SK-N-SH (cell line): ENCODE measurements at regions of chr1 and their contacts with region 1.

Region 1: GRCh38 chr1:30718636-30719405 is 4.6 kb downstream of the MATN1 start:
- DNase-seq: peak; percentile 93
- H3K4me3 ChIP-seq: peak overlapping the region; percentile 62 to 65
- H3K27ac ChIP-seq: peak overlapping the region; percentile 89 to 95
- H3K4me1 ChIP-seq: peaks cover 3 to 14% of the 10 kb centered on the region in 2 experiments; a peak in 2 of 4 replicates
- H3K27me3 ChIP-seq: no peaks in the 10 kb centered on the region
- CTCF ChIP-seq: peak; percentile 95
- EP300 ChIP-seq: no peak
- RAD21 ChIP-seq: no peak

Region 2: DNA sequence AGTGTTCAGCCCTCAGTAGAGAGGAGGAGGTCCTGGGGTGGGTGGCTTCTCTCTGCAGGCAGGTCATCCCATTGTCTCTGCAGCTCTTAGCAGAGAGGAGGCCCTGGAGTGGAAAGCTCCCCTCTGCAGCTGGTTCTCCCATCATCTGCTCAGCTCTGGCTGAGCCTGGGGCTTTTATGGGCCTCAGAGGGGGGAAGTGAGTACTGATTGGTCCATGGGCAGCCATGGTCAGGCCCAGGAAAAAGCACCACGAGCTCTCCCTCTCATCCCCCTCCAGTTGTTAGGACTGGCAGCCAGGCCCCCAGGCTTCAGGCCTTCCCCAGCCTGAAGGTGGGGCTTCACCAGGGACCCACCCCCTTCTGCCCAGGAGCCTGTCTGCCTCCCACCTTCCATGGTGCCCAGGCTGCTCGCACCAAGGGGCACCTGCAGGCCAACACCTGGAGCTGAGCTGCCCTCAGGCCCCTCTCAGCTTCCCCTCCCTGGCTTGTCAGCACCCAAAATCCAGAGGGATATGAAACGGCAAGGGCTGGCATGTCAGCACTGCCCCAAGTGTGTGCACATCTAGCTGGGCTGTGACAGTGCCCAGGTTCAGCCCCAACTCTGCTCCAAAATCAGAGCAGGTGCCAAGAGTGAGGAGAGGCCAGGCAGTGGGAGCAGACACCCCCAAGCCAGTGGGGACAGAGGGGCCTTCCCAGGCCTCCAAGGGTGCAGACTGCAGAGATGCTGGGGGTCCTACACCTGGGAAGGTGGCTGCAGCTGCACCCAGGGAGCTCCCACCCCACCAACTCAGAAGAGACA is 444.4 kb before region 1 on chr1:
- CTCF ChIA-PET with region 1: no interaction called
- POLR2A ChIA-PET with region 1: no interaction called
- DNase-seq: no peak
- H3K4me3 ChIP-seq: no peak overlapping the region
- H3K27ac ChIP-seq: no peak overlapping the region
- H3K4me1 ChIP-seq: no peaks in the 10 kb centered on the region
- H3K27me3 ChIP-seq: no peaks in the 10 kb centered on the region
- CTCF ChIP-seq: no peak
- EP300 ChIP-seq: no peak
- RAD21 ChIP-seq: no peak

Region 3: DNA sequence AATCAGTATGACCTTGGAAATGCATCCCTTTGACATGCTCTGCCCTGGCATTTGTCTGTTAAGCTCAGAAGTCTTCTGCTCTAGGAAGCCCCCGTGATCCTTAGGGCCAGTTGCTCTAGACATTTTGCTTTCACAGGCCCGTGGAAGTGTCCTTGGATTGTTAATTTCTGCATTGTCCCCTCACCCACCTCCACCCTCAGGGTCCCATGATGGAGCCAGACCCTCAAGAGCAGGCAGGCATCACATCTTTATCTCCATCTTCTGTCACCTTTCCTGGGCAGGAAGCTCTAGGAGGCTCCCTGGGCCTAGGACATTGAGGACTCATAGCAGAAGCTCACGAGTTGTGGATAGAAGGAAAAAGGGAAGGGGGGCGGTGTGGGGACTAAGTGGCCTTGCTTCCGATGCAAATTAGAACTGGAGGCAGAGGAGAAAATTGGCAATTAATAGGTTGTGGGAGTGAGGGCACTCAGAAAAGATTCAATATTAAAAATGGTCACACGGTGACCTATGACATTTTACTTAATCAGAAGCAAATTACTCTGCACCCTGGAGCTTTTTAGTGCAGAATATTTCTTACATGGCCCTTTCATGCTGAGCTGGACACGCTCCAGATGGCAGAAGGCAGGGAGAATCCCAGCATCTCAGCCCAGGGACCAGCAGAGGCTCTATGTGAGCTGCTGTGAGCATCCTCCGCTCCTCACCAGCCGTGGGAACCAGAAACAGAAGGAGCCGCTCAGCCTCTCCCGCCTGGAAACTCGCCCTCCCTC is 180.4 kb before region 1 on chr1:
- CTCF ChIA-PET with region 1: no interaction called
- POLR2A ChIA-PET with region 1: no interaction called
- DNase-seq: no peak
- H3K4me3 ChIP-seq: no peak overlapping the region
- H3K27ac ChIP-seq: no peak overlapping the region
- H3K4me1 ChIP-seq: no peaks in the 10 kb centered on the region; a peak in 1 of 4 replicates
- H3K27me3 ChIP-seq: no peaks in the 10 kb centered on the region
- CTCF ChIP-seq: no peak
- EP300 ChIP-seq: no peak
- RAD21 ChIP-seq: no peak

Region 4: GRCh38 chr1:30707412-30708360 is 11.1 kb before region 1 on chr1:
- CTCF ChIA-PET with region 1: interaction called, 19 read pairs
- POLR2A ChIA-PET with region 1: no interaction called
- DNase-seq: peak; percentile 90
- H3K4me3 ChIP-seq: no peak overlapping the region; a peak in 1 of 4 replicates
- H3K27ac ChIP-seq: peak overlapping the region in 1 of 2 experiments; percentile 16; a peak in 1 of 4 replicates
- H3K4me1 ChIP-seq: peaks cover 0 to 16% of the 10 kb centered on the region in 2 experiments; a peak in 2 of 4 replicates
- H3K27me3 ChIP-seq: no peaks in the 10 kb centered on the region; the same call in 1 of the 2 replicates
- CTCF ChIP-seq: peak; percentile 92
- EP300 ChIP-seq: no peak; a peak in 1 of 4 replicates
- RAD21 ChIP-seq: peak; percentile 100

Region 5: DNA sequence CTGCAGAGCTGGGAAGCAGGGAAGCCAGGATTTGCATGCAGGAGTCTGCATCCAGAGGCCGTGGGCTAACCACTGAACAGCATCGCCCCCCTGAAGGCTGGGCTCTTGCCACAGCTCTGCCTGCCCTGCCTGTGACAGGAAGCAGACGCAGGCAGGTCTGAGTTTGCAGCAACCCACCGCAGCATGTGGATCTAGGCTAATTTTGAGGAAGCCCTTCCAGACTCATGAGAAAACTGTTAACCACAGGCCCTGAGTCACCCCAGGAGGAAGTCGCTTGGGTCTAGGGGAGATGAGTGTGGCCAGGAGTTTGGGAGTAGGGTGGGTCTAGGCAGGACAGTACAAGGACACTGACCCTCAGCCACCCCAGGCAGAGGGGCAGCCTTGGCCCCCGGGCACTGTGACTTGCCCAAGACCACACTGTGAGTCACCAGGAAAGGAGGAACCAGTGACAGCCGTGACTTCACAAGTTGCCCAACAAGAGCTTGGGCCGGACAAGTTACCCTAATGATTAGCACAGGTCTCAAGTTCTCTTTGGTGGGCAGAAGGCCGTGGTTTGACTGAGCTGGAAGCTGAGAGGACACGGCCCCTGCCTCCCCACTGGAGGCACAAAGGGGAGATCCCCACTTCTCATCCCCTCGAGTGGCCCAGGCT is 37.8 kb after region 1 on chr1:
- CTCF ChIA-PET with region 1: interaction called, 26 read pairs
- POLR2A ChIA-PET with region 1: no interaction called
- DNase-seq: no peak
- H3K4me3 ChIP-seq: no peak overlapping the region
- H3K27ac ChIP-seq: peak overlapping the region in 1 of 2 experiments; percentile 14; a peak in 1 of 4 replicates
- H3K4me1 ChIP-seq: peaks cover 3 to 5% of the 10 kb centered on the region in 2 experiments; a peak in 2 of 4 replicates
- H3K27me3 ChIP-seq: no peaks in the 10 kb centered on the region
- CTCF ChIP-seq: no peak
- EP300 ChIP-seq: no peak
- RAD21 ChIP-seq: no peak

Region 6: DNA sequence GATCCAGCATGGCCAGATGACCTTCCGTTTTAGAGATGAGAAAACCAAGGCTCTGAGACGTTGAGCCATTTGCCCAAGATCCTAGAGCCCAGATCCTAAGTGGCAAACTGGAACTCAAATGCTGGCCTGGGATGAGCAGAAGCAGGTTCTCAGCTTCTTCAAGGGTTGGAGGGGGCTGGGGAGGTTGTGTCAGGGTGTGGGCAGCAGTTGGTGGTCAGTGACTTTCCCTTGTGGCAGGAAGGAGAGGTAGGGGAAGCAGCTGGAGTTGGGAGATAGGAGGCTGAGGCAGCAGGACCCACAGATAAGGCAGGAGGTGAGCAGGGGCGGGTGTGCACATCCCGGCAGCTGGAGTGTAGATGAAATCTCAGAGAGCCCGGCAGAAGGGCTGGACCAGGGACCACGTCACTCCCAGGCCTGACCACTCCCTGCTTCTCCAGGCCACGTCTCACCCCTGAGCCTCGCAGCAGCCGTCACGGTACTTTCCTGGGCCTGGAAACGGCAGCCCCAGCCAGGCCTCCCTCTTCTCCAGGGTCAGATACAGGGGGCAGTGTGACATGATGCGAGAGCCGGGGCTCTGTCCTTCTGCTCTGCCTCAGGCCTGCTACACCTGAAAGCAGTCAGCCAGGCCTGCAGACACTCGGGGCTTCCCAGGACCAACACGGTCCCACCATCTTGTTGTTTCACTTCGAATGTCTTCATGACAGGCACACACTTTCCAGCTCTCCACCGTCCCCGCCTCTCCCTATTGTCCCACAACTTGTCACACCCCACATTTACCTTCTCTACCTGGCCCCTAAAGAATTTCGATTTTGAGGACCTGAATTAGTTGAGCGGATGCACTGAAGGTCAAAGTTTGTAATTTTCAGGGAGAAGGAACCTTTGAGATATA is 50.3 kb after region 1 on chr1:
- CTCF ChIA-PET with region 1: interaction called, 25 read pairs
- POLR2A ChIA-PET with region 1: no interaction called
- DNase-seq: peak; percentile 75
- H3K4me3 ChIP-seq: no peak overlapping the region
- H3K27ac ChIP-seq: no peak overlapping the region; a peak in 1 of 4 replicates
- H3K4me1 ChIP-seq: peaks cover 0 to 6% of the 10 kb centered on the region in 2 experiments; a peak in 1 of 4 replicates
- H3K27me3 ChIP-seq: no peaks in the 10 kb centered on the region
- CTCF ChIP-seq: no peak
- EP300 ChIP-seq: no peak
- RAD21 ChIP-seq: no peak

Region 7: DNA sequence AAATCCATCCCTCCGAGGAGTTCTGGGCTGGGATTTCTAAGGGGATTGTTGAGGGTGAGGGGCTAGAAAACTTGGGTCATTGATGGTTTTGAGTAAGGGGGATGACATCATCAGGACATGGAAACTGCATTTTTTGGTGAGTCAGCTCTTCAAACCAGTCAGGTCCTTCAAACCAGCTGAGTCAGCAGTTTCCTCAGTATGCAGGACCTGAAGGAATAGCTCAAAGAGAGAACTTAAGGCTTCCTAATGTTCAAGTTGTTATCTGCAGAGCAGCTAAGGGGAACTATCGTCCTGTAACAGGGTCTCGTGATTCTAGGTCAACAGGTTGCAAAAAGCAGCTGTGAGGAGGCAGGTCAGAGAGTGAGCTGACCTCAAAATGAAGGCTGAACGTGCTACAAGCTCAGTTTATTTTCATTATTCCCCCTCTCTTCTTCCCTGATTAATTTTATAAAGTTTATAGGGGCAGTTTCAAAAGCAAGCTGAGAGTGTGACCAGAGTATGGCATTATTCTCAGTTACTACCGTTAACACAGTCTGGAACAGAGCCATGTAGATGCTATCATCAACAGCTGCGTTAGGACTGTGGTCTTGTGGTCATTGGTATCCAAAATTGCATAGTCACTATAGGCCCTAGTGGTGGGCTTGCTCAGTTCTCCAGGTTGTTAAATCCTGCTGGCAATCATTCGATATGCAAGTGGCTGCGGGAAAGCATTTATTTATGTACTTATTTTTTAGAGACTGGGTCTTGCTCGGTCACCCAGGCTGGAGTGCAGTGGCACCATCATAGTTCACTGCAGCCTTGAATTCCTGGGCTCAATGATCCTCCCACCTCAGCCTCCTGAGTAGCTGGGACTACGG is 200.4 kb after region 1 on chr1:
- CTCF ChIA-PET with region 1: interaction called, 93 read pairs
- POLR2A ChIA-PET with region 1: no interaction called
- DNase-seq: no peak
- H3K4me3 ChIP-seq: no peak overlapping the region
- H3K27ac ChIP-seq: no peak overlapping the region; a peak in 2 of 4 replicates
- H3K4me1 ChIP-seq: peaks cover 6 to 12% of the 10 kb centered on the region in 2 experiments; a peak in 3 of 4 replicates
- H3K27me3 ChIP-seq: no peaks in the 10 kb centered on the region
- CTCF ChIP-seq: no peak
- EP300 ChIP-seq: 0 out of 4 replicates have a peak, but pooled peaks of 1 of the 2 experiments have one; percentile 17
- RAD21 ChIP-seq: no peak